Astrocyte of the cerebellum (primary cell): ENCODE measurements at regions of chr16 and their contacts with region 1.

Region 1: DNA sequence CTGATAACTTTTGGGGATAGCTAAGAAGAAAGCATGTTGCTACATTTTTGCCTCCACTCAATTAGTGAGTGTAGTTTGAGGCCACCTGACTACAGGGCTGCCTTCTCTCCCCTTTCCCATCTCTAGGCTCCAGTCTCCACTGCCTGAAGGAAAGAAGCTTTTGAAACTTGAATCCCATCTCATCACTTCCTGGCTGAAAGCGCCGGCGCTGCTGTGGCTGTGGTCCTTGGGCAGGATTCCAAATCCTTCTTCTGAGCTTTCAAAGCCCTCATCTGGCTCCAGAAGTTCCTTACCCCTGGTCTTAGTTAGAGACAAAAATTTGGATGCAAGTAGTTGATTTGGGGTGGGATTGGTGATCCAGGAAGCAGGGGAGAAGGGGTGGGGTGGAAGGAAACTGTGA is 119.4 kb downstream of the FOXL1 start:
- DNase-seq: peak; percentile 28
- H3K4me3 ChIP-seq: no peak overlapping the region
- CTCF ChIP-seq: no peak

Region 2: GRCh38 chr16:86664533-86665318 is 33.0 kb before region 1 on chr16:
- in situ Hi-C with region 1: no loop called
- DNase-seq: peak; percentile 60
- H3K4me3 ChIP-seq: no peak overlapping the region
- CTCF ChIP-seq: no peak

Region 3: DNA sequence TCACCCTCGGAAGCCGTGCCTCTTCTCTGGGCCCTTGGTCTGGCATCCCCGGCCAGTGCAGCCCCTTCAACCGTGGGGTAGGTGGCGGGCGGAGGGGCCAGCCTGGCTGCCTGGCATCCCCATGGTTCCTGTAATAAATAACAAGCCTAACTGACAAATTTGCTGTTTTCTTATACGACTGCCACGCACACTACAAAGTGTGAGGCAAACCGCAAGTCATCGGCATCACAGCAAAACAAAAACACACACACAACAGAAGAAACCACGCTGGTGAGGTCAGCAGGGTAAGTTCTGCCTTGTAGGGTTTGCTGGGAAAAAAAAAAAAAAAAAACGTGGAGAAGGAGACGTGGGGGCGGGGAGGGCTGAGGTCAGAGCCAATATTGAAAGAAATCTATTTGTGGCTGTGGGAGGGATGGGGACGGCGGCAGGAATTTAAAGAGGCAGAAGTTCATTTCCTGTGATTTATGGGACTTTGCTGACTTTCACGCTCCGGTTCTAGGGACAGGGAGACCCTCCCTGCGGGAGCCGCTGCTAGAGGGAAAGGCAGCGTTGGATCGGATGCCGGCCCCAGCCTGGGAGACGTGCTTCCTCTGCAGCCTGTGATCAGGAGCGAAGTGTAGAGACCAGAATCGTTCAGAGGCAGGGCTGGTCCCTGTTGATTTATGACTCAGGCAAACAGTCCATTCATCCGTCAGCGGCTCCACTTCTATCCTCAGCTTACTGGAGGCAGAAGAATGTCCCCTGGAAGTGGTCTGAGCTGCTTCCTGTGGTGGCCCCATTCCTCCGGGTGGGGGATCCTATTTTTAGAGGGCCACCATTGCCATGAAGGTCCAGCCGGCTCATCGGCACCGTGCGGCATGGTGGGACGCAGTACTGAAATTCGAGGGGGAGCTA is 43.4 kb after region 1 on chr16:
- in situ Hi-C with region 1: no loop called
- DNase-seq: peak; percentile 42
- H3K4me3 ChIP-seq: peak overlapping the region; percentile 26
- CTCF ChIP-seq: no peak

Region 4: DNA sequence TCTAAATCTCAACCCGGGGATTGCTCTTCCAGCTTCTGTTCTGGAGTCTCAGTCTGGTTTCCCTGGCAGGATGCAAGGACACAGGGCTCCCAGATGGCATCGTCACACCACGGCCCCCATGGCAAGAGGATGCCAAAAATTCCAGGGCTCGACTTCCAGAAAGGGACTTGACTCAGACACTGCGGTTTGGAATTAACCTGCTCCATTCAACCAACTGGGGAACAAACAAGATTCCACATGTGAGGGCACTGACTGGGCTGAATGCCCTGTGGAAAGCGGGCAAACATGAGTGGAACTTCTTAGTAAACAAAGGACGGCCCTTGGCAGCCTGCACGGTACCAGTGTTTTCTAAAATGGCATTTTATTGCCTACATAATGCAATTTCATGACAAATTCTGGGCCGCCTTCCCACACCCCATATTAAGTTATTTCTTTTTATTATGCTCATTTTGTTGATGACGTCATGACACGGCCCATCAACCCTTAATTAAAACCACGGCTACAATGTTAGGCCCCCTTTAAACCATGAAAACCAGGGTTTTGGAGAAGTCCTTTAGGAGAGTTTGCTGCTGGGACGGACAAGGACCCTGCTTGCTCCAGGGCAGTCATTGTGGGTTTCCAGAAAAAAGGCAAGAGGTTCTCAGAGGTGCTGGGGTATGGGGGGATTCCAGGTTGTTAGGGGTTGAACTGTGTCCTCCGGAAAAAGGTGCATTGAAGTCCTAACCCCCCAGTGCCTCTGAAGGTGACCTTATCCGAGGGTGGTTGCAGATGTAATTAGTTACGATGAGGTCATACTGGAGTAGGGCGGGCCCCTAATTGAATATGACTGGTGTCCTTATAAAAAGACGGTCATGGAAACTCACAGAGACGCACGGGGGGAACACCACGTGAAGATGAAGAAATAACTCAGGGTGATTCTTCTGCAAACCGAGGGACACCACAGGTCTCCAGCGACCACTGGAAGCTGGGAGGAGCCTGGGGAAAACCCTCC is 86.2 kb after region 1 on chr16:
- in situ Hi-C with region 1: no loop called
- DNase-seq: no peak
- H3K4me3 ChIP-seq: no peak overlapping the region
- CTCF ChIP-seq: no peak

Region 5: DNA sequence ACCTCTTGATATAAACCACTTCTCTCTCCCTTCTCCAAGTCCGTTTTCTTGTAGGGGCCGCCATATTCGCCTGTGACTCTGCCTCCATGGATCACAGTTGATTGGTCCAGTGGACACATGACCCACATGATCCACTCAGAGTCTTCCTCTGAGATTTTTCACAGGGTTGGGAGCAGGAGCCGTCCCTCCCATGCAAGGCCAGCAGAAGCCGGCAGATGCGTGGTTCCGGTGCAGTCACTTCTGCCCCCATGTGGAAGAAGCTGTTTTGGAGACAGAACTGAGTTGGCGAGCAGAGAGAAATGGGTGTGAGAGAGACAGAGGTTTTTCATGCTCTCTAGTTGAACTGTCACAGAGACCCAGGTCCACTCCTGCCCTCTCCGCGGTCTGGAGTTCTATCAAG is 536.2 kb after region 1 on chr16:
- in situ Hi-C with region 1: loop called (anchors 10 kb)
- DNase-seq: peak; percentile 19
- H3K4me3 ChIP-seq: no peak overlapping the region
- CTCF ChIP-seq: peak; percentile 41

Region 6: DNA sequence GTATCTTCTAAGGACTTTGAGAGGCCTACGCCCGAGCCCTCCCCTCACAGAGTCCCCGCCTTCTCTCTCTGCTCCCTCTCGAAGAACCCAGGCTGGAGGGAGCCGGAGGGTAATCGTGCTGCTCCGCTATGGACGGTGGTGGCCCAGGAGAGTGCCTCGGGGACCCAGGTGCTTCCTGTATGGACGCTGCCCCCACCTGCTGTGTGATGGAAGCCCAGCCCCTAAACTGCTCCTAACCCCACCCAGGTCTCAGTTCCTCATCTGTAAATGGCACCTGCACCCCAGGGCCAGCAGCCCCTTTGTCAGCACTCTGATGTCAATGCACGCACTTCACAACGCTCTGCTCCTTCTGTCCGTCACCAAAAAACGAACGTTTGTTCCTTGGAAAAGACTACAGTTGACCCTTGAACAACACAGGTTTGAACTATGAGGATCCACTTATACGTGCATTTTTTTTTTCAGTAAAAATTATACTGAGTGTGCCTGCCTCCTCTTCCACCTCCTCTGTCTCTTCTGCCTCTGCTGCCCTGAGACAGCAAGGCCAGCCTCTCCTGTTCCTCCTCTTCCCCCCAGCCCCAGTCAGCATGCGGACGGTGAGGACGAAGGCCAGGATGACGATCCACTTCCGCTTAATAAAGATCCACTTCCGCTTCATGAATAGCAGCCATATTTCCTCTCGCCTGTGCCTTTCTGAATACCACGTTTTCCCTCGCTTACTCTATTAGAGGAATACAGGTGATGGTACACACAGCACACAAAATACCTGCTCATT is 1371.9 kb after region 1 on chr16:
- in situ Hi-C with region 1: no loop called
- DNase-seq: no peak
- H3K4me3 ChIP-seq: no peak overlapping the region
- CTCF ChIP-seq: no peak